Breast epithelium (tissue), 4 donors: ENCODE measurements at regions of chr13 and their contacts with region 1.

Region 1: GRCh38 chr13:100532090-100532766 is 56.4 kb downstream of the GGACT start:
- DNase-seq: no peak
- H3K4me3 ChIP-seq: no peak overlapping the region
- H3K27ac ChIP-seq: peak overlapping the region; percentile 48 to 74
- H3K4me1 ChIP-seq: no peaks in the 10 kb centered on the region
- H3K27me3 ChIP-seq: no peaks in the 10 kb centered on the region
- CTCF ChIP-seq: no peak
- POLR2A ChIP-seq: no peak

Region 2: GRCh38 chr13:98606296-98606695 is 1925.9 kb before region 1 on chr13:
- intact Hi-C with region 1: no loop called
- DNase-seq: no peak
- H3K4me3 ChIP-seq: no peak overlapping the region
- H3K27ac ChIP-seq: no peak overlapping the region
- H3K4me1 ChIP-seq: no peaks in the 10 kb centered on the region
- H3K27me3 ChIP-seq: no peaks in the 10 kb centered on the region
- CTCF ChIP-seq: no peak
- POLR2A ChIP-seq: no peak

Region 3: DNA sequence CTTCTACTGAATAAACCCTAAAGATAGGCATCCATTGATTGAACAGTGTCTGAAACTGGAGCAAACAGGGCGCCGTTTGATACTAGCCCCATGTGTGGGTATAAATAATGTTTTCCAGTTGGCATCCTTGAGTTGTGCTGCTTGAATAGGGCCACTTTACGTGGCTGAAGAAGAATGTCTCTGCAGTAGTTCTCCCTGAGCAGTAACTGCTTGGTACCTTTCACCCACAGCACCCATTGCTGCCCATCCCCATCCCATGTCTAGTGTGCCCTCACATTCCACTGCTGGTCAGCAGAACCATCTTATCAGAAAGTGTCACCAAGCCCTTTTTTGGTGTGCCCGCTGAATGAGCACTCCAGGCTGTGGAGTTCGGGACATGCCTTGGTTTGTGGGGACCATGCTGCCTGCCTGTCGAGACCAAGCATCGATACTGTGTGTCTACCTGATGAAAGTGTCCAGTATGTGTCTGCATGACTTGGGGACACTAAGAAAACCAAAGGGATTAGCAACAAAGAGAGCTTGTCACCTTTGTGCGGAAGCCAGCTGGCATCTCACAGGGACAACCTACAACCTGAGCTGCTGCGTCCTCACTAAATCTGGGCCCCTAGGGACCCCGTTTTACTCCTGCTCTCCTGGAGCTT is 868.9 kb before region 1 on chr13:
- intact Hi-C with region 1: no loop called
- DNase-seq: no peak
- H3K4me3 ChIP-seq: no peak overlapping the region
- H3K27ac ChIP-seq: no peak overlapping the region
- H3K4me1 ChIP-seq: no peaks in the 10 kb centered on the region
- H3K27me3 ChIP-seq: peaks cover 0 to 5% of the 10 kb centered on the region in 2 donors
- CTCF ChIP-seq: no peak
- POLR2A ChIP-seq: no peak

Region 4: DNA sequence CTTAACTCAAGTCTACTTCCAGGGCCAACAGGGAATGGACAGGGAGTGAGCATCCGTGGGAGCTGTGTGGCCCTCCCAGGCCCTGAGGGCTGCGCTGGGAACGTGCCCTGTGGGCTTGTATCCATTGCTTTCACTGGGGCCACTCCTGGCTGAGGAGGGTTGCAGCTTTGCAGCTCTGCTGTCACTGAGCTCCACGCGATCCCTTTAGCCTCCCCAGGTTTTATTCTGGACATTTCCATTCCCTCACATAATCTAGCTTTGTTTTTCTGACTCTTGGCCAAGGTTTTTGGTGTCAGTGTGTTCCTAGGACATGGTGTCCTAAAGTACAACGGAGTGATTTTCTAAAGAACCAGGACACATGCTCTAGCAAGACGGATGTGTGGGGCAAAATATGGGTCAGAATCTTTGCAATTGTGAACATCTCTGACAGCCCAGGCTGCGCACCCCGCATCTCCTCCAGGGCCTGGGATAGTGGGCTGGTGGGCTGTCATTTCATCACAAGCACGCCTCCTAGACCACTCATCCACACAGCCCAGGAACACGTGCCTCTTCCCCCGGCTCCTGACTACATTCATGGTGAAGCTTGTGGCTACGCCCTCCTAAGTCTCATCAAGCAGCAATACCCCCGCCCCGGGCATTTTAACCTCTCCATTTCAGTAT is 28.4 kb after region 1 on chr13:
- intact Hi-C with region 1: loop called (anchors 1 kb)
- DNase-seq: no peak
- H3K4me3 ChIP-seq: no peak overlapping the region
- H3K27ac ChIP-seq: no peak overlapping the region
- H3K4me1 ChIP-seq: no peaks in the 10 kb centered on the region
- H3K27me3 ChIP-seq: no peaks in the 10 kb centered on the region
- CTCF ChIP-seq: no peak
- POLR2A ChIP-seq: no peak